ENCODE measurements at regions of chr6 and their contacts with region 1.

Region 1: GRCh38 chr6:124870611-124871459 is 91.4 kb upstream of the RNF217 start:
- DNase-seq: peak; percentile 57
- H3K4me3 Mint-ChIP-seq: no peak overlapping the region
- H3K27ac Mint-ChIP-seq: no peak overlapping the region
- H3K4me1 Mint-ChIP-seq: no peaks in the 10 kb centered on the region
- H3K27me3 Mint-ChIP-seq: no peaks in the 10 kb centered on the region
- CTCF ChIP-seq: peak; percentile 77

Region 2: GRCh38 chr6:125114248-125114858 is 243.5 kb after region 1 on chr6:
- CTCF ChIA-PET with region 1: interaction called, 127 read pairs
- POLR2A ChIA-PET with region 1: interaction called, 10 read pairs
- intact Hi-C with region 1: loop called (anchors 1 kb)
- DNase-seq: peak; percentile 74
- H3K4me3 Mint-ChIP-seq: no peak overlapping the region
- H3K27ac Mint-ChIP-seq: no peak overlapping the region
- H3K4me1 Mint-ChIP-seq: no peaks in the 10 kb centered on the region
- H3K27me3 Mint-ChIP-seq: no peaks in the 10 kb centered on the region
- CTCF ChIP-seq: peak; percentile 84

Region 3: DNA sequence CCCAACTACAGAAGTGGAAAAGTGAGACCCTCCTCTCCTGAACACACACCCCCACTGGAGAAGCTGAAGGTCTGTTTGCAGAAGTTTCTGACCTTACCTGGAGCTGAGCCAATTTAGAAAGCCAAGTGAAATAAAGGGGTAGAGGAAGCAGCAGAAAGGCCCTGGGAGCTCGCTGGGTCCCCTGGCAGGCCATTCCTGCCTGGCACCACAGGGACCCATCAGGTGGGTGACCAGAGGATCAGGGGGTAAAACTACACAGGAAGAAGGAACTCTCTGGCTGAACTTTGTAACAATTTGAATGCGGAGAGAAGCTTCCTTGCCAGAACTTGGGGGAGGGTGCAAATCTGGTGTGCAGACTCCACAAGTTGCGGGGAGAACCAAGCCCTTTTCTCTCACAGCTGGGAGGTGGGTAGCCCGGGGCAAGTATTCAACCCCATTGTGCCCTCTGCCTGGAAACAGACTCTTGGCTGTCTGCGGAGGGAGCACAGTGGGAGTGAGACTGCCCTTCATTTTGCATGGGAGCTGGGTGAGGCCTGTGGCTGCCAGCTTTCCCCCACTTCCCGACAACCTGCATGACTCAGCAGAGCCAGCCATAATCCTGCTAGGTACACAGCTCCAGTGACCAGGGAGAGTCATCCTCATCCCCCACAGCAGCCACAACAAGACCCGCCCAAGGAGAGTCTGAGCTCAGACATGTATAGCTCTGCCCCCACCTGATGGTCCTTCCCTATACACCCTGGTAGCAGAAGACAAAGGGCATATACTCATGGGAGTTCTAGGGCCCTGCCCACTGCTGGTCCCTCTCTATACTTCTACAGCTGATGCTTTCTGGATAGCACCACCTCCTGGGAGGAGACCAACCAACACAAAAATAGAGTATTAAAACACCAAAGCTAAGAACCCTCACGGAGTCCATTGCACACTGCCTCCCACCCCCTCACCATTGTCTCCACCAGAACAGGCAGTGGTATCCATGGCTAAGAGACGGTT is 253.2 kb after region 1 on chr6:
- CTCF ChIA-PET with region 1: interaction called, 15 read pairs
- POLR2A ChIA-PET with region 1: interaction called, 5 read pairs
- intact Hi-C with region 1: no loop called
- DNase-seq: peak; percentile 96
- H3K4me3 Mint-ChIP-seq: peak overlapping the region; percentile 42
- H3K27ac Mint-ChIP-seq: peak overlapping the region; percentile 76
- H3K4me1 Mint-ChIP-seq: peaks cover 17% of the 10 kb centered on the region
- H3K27me3 Mint-ChIP-seq: no peaks in the 10 kb centered on the region
- CTCF ChIP-seq: no peak

Region 4: GRCh38 chr6:125301435-125302391 is 430.9 kb after region 1 on chr6 and contains the start of gene HDDC2:
- CTCF ChIA-PET with region 1: interaction called, 3 read pairs
- POLR2A ChIA-PET with region 1: interaction called, 4 read pairs
- intact Hi-C with region 1: loop called (anchors 2 kb)
- DNase-seq: peak; percentile 60
- H3K4me3 Mint-ChIP-seq: peak within 1 kb of the TSS; percentile 79
- H3K27ac Mint-ChIP-seq: peak within 1 kb of the TSS; percentile 33
- H3K4me1 Mint-ChIP-seq: peaks cover 31% of the 10 kb centered on the region
- H3K27me3 Mint-ChIP-seq: peaks cover 7% of the 10 kb centered on the region
- CTCF ChIP-seq: no peak
- total RNA-seq, gene HDDC2: 141 and 167 TPM in 2 replicates

Region 5: GRCh38 chr6:125314019-125314581 is 443.3 kb after region 1 on chr6:
- CTCF ChIA-PET with region 1: interaction called, 9 read pairs
- POLR2A ChIA-PET with region 1: interaction called, 3 read pairs
- intact Hi-C with region 1: loop called (anchors 2 kb)
- DNase-seq: peak; percentile 73
- H3K4me3 Mint-ChIP-seq: no peak overlapping the region
- H3K27ac Mint-ChIP-seq: no peak overlapping the region
- H3K4me1 Mint-ChIP-seq: no peaks in the 10 kb centered on the region
- H3K27me3 Mint-ChIP-seq: peaks cover 12% of the 10 kb centered on the region
- CTCF ChIP-seq: peak; percentile 79

Region 6: GRCh38 chr6:125749173-125749864 is 878.5 kb after region 1 on chr6 and contains the start of gene HEY2:
- CTCF ChIA-PET with region 1: interaction called, 3 read pairs
- POLR2A ChIA-PET with region 1: no interaction called
- intact Hi-C with region 1: loop called (anchors 5 kb)
- DNase-seq: peak; percentile 88
- H3K4me3 Mint-ChIP-seq: peak within 1 kb of the TSS; percentile 73
- H3K27ac Mint-ChIP-seq: no peak within 1 kb of the TSS
- H3K4me1 Mint-ChIP-seq: peaks cover 9% of the 10 kb centered on the region
- H3K27me3 Mint-ChIP-seq: peaks cover 97% of the 10 kb centered on the region
- CTCF ChIP-seq: no peak
- total RNA-seq, gene HEY2: not detected in 2 replicates

Region 7: GRCh38 chr6:125764121-125764671 is 893.4 kb after region 1 on chr6:
- CTCF ChIA-PET with region 1: no interaction called
- POLR2A ChIA-PET with region 1: no interaction called
- intact Hi-C with region 1: loop called (anchors 5 kb)
- DNase-seq: no peak
- H3K4me3 Mint-ChIP-seq: no peak overlapping the region
- H3K27ac Mint-ChIP-seq: no peak overlapping the region
- H3K4me1 Mint-ChIP-seq: no peaks in the 10 kb centered on the region
- H3K27me3 Mint-ChIP-seq: peaks cover 94% of the 10 kb centered on the region
- CTCF ChIP-seq: no peak

Measured in MCF 10A (cell line).